ENCODE measurements at regions of chr13 and their contacts with region 1.

Region 1: GRCh38 chr13:44197791-44198770 is 175.5 kb upstream of the SERP2 start:
- DNase-seq: no peak
- ATAC-seq: peak in 5 of 8 donors; percentile 16 to 56 (median 41)
- H3K4me3 ChIP-seq: no peak overlapping the region
- H3K27ac ChIP-seq: peak overlapping the region in 1 of 10 donors; percentile 0
- H3K4me1 ChIP-seq: peaks cover 0 to 25% (median 5%) of the 10 kb centered on the region in 9 donors
- H3K27me3 ChIP-seq: no peaks in the 10 kb centered on the region
- CTCF ChIP-seq: no peak

Region 2: DNA sequence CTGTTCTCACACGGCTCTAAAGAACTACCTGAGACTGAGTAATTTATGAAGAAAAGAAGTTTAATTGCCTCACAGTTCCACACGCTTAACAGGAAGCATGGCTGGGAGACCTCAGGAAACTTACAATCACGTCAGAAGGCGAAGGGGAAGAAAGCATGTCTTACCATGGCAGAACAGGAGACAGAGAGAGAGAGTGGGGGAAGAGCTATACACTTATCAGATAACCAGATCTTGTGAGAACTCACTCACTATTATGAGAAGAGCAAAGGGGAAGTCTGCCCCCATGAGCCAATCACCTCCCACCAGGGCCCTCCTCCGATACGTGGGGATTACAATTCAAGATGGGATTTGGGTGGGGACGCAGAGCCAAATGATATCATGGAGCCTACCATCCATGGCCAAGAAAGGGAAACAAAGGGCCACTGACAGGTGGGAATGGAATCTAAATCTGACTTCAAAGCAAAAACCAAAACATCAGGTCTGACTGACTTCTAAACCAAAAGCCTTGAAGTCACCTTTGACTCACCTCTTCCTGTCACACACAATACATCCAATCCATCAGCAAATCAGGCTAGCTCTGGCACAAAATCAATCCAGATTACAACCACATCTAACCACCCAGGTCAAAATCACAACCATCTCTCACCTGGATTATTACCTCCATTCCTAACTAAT is 601.0 kb before region 1 on chr13:
- intact Hi-C with region 1: no loop called
- DNase-seq: no peak
- ATAC-seq: no peak
- H3K4me3 ChIP-seq: no peak overlapping the region
- H3K27ac ChIP-seq: no peak overlapping the region
- H3K4me1 ChIP-seq: no peaks in the 10 kb centered on the region
- H3K27me3 ChIP-seq: no peaks in the 10 kb centered on the region
- CTCF ChIP-seq: no peak

Region 3: DNA sequence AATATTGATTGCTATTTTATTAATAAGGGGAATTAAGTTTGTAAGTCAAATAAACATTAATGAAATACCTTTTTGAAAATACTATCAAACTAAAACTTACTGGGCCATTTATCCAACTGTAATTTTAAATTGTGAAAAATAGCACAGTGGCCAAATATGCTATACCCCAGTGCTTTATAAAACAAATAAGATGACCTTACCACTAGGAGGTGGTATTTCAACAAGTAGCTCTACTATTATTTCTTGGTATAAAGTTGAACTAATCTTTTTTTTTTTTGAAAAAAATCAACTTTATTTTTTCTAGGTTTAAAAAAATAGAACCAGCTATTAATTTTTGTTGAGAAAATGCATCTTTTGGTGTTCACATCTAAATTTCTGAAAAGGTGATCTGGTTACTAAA is 303.6 kb before region 1 on chr13:
- intact Hi-C with region 1: no loop called
- DNase-seq: no peak
- ATAC-seq: no peak
- H3K4me3 ChIP-seq: no peak overlapping the region
- H3K27ac ChIP-seq: no peak overlapping the region
- H3K4me1 ChIP-seq: no peaks in the 10 kb centered on the region
- H3K27me3 ChIP-seq: no peaks in the 10 kb centered on the region
- CTCF ChIP-seq: peak in 2 of 9 donors; percentile 18 to 21

Region 4: GRCh38 chr13:44148159-44148919 is 49.7 kb before region 1 on chr13:
- intact Hi-C with region 1: loop called in 2 of 10 experiments (anchors 5 kb)
- DNase-seq: no peak
- ATAC-seq: no peak
- H3K4me3 ChIP-seq: no peak overlapping the region
- H3K27ac ChIP-seq: no peak overlapping the region
- H3K4me1 ChIP-seq: peaks cover 0 to 15% (median 2%) of the 10 kb centered on the region in 9 donors
- H3K27me3 ChIP-seq: no peaks in the 10 kb centered on the region
- CTCF ChIP-seq: no peak

Region 5: DNA sequence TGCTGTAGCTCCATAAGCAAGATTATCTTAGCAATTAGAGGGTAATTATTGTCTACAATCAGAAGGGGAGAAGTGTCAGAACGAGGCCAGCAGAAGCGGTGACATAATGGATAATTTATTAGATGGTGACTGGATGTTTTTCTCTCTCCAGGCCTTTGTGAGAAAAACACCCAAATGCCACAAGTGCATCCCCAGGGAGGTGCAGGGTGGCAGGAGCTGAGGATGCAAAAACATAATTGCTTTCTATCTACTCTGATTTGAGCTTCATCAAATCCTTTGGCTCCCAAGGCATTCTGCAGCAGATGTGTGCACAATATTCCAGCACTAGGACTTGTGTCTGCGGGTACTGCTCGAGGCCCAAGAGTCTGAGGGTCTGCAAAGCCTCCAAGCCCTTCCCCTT is 44.6 kb before region 1 on chr13:
- intact Hi-C with region 1: loop called in 2 of 10 experiments (anchors 5 kb)
- DNase-seq: no peak
- ATAC-seq: no peak
- H3K4me3 ChIP-seq: no peak overlapping the region
- H3K27ac ChIP-seq: no peak overlapping the region
- H3K4me1 ChIP-seq: peaks cover 0 to 19% (median 11%) of the 10 kb centered on the region in 9 donors
- H3K27me3 ChIP-seq: no peaks in the 10 kb centered on the region
- CTCF ChIP-seq: no peak

Region 6: GRCh38 chr13:44231786-44232516 is 33.9 kb after region 1 on chr13:
- intact Hi-C with region 1: loop called in 5 of 10 experiments (anchors 2 to 5 kb)
- DNase-seq: peak in 1 of 2 donors; percentile 27
- ATAC-seq: peak in 4 of 8 donors; percentile 67 to 97 (median 83)
- H3K4me3 ChIP-seq: no peak overlapping the region
- H3K27ac ChIP-seq: peak overlapping the region in 2 of 10 donors; percentile 8 to 63
- H3K4me1 ChIP-seq: peaks cover 9 to 29% (median 14%) of the 10 kb centered on the region in 9 donors
- H3K27me3 ChIP-seq: no peaks in the 10 kb centered on the region
- CTCF ChIP-seq: peak in 1 of 9 donors; percentile 11

Measured in heart right ventricle (tissue), 16 donors.